Mammary epithelial cell (primary cell): ENCODE measurements at regions of chr12 and their contacts with region 1.

Region 1: GRCh38 chr12:109597795-109598427 is 24.3 kb downstream of the MVK start:
- DNase-seq: peak; percentile 62
- H3K4me3 ChIP-seq: no peak overlapping the region
- H3K27ac ChIP-seq: no peak overlapping the region
- H3K4me1 ChIP-seq: peaks cover 5% of the 10 kb centered on the region
- H3K27me3 ChIP-seq: no peaks in the 10 kb centered on the region
- CTCF ChIP-seq: peak; percentile 91 to 97

Region 2: GRCh38 chr12:109582658-109583057 is 15.3 kb before region 1 on chr12:
- CTCF ChIA-PET with region 1: no interaction called
- dilution Hi-C with region 1: no loop called
- in situ Hi-C with region 1: no loop called
- intact Hi-C with region 1: loop called (anchors 1 kb)
- DNase-seq: peak; percentile 51
- H3K4me3 ChIP-seq: no peak overlapping the region
- H3K27ac ChIP-seq: peak overlapping the region; percentile 81
- H3K4me1 ChIP-seq: peaks cover 22% of the 10 kb centered on the region
- H3K27me3 ChIP-seq: no peaks in the 10 kb centered on the region
- CTCF ChIP-seq: peak in 1 of 2 donors; percentile 34

Region 3: DNA sequence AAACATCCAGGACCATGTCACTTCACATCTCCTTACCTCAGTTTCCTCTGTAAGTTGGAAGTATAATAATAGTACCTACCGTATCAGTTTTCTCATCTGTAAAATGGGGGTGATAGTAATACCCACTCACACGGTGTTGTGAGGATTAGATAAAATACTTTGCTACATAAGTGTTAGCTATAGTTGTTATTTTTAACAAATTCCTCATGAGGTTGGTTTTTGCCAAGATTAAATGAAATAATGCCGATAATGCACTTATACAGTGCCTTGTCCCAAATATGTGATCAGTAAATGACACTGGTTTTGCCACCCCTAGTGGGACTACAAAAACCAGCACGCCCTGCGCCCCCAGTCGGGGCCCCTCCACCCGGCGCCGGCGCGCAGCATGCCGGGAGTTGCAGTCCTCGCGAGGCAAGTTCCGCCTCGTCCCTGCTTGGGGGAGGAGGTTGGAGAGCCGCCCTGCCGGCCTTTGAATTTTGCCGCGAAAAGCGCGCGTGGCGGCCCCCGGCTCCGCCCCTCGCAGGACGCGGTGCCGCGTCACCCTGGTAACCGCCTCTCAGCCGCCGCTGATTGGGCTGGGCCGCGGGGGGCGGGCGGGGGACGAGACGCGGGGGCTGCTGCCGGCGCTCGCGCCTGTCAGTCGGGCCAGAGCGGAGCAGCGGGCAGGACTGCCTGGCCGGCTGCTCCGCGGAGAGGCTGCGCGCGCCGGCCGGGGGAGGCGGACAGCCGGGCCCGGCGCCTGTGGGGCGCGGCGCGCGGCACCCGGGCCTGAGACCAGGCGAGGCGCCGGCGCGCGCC is 115.5 kb after region 1 on chr12 and contains the start of gene FAM222A:
- CTCF ChIA-PET with region 1: no interaction called
- dilution Hi-C with region 1: no loop called
- in situ Hi-C with region 1: no loop called
- intact Hi-C with region 1: loop called (anchors 2 kb)
- DNase-seq: peak; percentile 95
- H3K4me3 ChIP-seq: peak within 1 kb of the TSS; percentile 21 to 59 (median 45)
- H3K27ac ChIP-seq: no peak within 1 kb of the TSS
- H3K4me1 ChIP-seq: peaks cover 5% of the 10 kb centered on the region
- H3K27me3 ChIP-seq: peaks cover 4% of the 10 kb centered on the region
- CTCF ChIP-seq: no peak
- total RNA-seq, gene FAM222A: 0.50 to 1.3 TPM

Region 4: DNA sequence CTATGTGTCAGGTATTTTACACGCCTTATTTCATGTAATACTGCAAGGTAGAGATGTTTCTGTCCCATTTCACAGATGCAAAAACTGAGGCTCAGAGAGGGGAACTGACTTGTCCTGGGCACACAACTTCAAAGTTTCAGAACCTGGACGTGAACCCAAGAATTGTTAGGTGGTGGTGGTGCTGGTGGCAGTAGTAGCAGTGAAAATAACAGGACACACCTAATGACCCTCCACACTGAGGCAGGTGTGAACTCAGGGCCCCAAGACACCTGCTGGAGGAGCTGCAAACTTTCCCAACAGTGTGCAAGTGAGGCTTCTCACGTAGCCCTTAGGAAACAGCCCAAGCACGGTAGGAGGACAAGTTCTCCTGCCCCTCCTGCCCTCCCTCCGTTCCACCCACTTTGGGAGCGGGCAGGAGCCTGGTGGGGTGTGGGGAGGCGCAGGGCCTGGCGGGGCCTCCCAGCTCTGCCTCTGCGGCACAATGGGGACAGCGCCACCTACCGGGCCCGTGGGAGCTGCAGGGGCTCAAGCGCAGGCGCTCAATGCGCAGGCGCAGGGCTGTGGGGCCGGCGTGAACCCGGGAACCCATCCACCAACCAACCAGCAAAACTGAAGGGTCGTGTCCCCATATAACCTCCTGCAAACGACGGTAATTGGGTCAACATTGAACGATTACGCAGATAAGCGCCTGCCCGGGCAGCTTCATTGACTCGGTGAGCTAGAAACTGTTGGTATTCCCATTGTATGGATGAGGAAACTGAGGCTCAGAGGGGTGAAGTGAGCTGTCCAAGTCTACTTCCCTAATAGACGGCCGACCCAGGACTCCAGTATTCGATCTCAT is 247.3 kb after region 1 on chr12:
- CTCF ChIA-PET with region 1: no interaction called
- dilution Hi-C with region 1: no loop called
- in situ Hi-C with region 1: no loop called
- intact Hi-C with region 1: loop called (anchors 2 kb)
- DNase-seq: peak; percentile 83
- H3K4me3 ChIP-seq: peak overlapping the region in 1 of 3 experiments; percentile 28
- H3K27ac ChIP-seq: no peak overlapping the region
- H3K4me1 ChIP-seq: peaks cover 14% of the 10 kb centered on the region
- H3K27me3 ChIP-seq: no peaks in the 10 kb centered on the region
- CTCF ChIP-seq: peak; percentile 82 to 99